ENCODE measurements at regions of chr11 and their contacts with region 1.

Region 1: GRCh38 chr11:59822989-59823566 is 12.5 kb upstream of the MRPL16 start:
- DNase-seq: peak in 3 of 6 donors; percentile 29 to 45 (median 31)
- ATAC-seq: peak; percentile 68 to 100 (median 95)
- H3K4me3 ChIP-seq: no peak overlapping the region
- H3K27ac ChIP-seq: no peak overlapping the region
- H3K4me1 ChIP-seq: peaks cover 0 to 5% (median 0%) of the 10 kb centered on the region in 3 donors
- H3K27me3 ChIP-seq: no peaks in the 10 kb centered on the region
- CTCF ChIP-seq: peak; percentile 21 to 58 (median 50)

Region 2: DNA sequence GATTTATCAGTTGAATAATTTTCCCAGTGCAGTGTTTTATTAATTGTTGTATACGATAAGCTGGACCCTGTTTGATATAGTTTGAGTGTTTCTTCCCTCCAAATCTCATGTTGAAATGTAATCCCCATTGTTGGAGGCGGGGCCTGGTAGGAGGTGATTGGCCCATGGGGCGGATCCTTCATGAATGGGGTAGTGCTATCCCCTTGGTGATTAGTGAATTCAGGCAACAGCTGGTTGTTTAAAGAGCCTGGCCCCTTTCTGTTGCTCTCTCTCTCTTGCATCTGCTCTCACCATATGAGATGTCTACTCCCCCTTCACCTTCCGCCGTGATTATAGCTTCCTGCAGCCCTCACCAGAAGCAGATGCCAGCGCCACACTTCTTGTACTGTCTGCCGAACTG is 385.3 kb before region 1 on chr11:
- intact Hi-C with region 1: no loop called
- DNase-seq: no peak
- ATAC-seq: no peak
- H3K4me3 ChIP-seq: no peak overlapping the region
- H3K27ac ChIP-seq: no peak overlapping the region
- H3K4me1 ChIP-seq: no peaks in the 10 kb centered on the region
- H3K27me3 ChIP-seq: no peaks in the 10 kb centered on the region
- CTCF ChIP-seq: no peak

Region 3: GRCh38 chr11:59787816-59788215 is 35.3 kb before region 1 on chr11:
- intact Hi-C with region 1: no loop called
- DNase-seq: no peak
- ATAC-seq: no peak
- H3K4me3 ChIP-seq: no peak overlapping the region
- H3K27ac ChIP-seq: peak overlapping the region; percentile 29 to 73 (median 41)
- H3K4me1 ChIP-seq: peaks cover 15 to 19% (median 18%) of the 10 kb centered on the region in 3 donors
- H3K27me3 ChIP-seq: no peaks in the 10 kb centered on the region
- CTCF ChIP-seq: no peak

Region 4: GRCh38 chr11:59918987-59919589 is 96.0 kb after region 1 on chr11:
- intact Hi-C with region 1: loop called in 2 of 3 experiments (anchors 10 kb)
- DNase-seq: peak in 3 of 6 donors; percentile 17 to 32 (median 21)
- ATAC-seq: peak in 3 of 4 donors; percentile 59 to 90 (median 72)
- H3K4me3 ChIP-seq: no peak overlapping the region
- H3K27ac ChIP-seq: no peak overlapping the region
- H3K4me1 ChIP-seq: no peaks in the 10 kb centered on the region
- H3K27me3 ChIP-seq: no peaks in the 10 kb centered on the region
- CTCF ChIP-seq: peak in 2 of 4 donors; percentile 12 to 46

Region 5: DNA sequence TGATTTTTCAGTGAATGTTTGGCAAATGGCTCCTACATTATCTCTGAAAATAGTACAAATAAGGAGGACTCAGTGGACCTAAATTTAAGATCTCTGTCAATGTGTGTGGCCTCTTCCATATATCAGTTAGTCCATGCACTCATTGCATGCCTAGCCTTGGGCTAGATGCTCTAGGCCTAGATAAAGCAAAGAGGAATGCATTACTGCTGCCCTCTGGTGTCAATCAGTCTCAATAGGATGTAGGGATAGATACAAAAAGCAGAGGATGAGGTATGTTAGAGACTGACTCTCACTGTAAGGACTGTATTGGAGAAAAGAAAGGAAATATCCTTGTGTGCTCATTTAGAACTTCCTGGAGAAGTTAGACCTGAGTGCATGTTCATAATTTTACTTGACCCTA is 307.4 kb after region 1 on chr11:
- intact Hi-C with region 1: loop called in 1 of 3 experiments (anchors 5 kb)
- DNase-seq: peak in 1 of 6 donors; percentile 14
- ATAC-seq: peak; percentile 69 to 95 (median 84)
- H3K4me3 ChIP-seq: no peak overlapping the region
- H3K27ac ChIP-seq: no peak overlapping the region
- H3K4me1 ChIP-seq: no peaks in the 10 kb centered on the region
- H3K27me3 ChIP-seq: no peaks in the 10 kb centered on the region
- CTCF ChIP-seq: peak in 2 of 4 donors; percentile 22 to 35

Measured in pancreas (tissue), 10 donors.